ENCODE measurements at regions of chr1 and their contacts with region 1.

Region 1: DNA sequence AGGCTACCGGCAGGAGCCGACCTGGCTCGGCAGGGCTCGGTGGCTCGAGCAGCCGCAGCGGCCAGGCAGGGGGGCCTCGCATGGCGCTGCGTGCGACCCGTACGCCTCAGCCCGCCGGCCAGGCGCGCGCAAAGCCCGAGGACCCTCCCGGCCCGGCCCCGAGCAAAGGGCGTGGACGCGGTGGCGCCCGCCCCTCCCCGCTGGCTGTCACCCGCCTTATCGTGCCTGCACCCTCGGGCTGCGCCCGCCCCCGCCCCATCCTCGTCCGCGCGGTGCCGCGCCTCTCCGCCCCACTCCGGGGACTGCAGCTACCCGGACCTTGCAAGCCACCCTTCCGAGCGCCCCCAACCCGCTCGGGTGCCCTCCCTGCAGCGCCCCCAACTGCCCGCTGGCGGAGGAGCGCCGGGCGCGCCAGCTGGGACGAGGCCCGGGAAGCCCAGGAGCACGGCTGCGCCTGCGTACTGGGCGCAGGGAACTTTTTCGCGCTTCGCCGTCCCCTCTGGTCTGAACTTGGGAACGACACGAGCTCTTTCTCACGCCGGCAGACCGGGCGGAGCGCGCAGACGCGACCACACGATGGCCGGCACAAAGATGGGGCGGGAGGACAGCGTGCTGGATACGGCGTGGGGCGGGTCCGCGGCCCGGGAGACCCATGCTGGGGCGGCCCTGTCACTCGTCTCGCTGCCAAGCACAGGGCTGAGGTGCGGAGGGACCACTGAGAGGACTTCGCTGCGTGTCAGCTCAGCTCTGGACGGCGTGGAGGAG is at the start of gene ABCB10:
- DNase-seq: peak; percentile 68 to 84 (median 81)
- H3K4me3 ChIP-seq: peak within 1 kb of the TSS; percentile 74
- H3K4me3 Mint-ChIP-seq: peak within 1 kb of the TSS; percentile 94 to 100 (median 97)
- H3K27ac ChIP-seq: peak within 1 kb of the TSS; percentile 59
- H3K27ac Mint-ChIP-seq: peak within 1 kb of the TSS; percentile 85 to 94 (median 90)
- H3K4me1 ChIP-seq: peaks cover 20% of the 10 kb centered on the region
- H3K4me1 Mint-ChIP-seq: peaks cover 39 to 49% (median 48%) of the 10 kb centered on the region in 3 donors
- H3K27me3 ChIP-seq: no peaks in the 10 kb centered on the region
- H3K27me3 Mint-ChIP-seq: no peaks in the 10 kb centered on the region
- total RNA-seq, gene ABCB10: 42.7 to 48.0 TPM

Region 2: GRCh38 chr1:229341774-229342655 is 216.7 kb before region 1 on chr1:
- CTCF ChIA-PET with region 1: no interaction called
- POLR2A ChIA-PET with region 1: interaction called, 11 read pairs
- DNase-seq: peak; percentile 79 to 89 (median 83)
- H3K4me3 ChIP-seq: peak overlapping the region; percentile 68
- H3K4me3 Mint-ChIP-seq: peak overlapping the region; percentile 83 to 95 (median 93)
- H3K27ac ChIP-seq: peak overlapping the region; percentile 76
- H3K27ac Mint-ChIP-seq: peak overlapping the region; percentile 79 to 96 (median 92)
- H3K4me1 ChIP-seq: peaks cover 14% of the 10 kb centered on the region
- H3K4me1 Mint-ChIP-seq: peaks cover 42 to 60% (median 47%) of the 10 kb centered on the region in 3 donors
- H3K27me3 ChIP-seq: no peaks in the 10 kb centered on the region
- H3K27me3 Mint-ChIP-seq: peaks cover 7 to 16% of the 10 kb centered on the region in 2 donors

Region 3: GRCh38 chr1:229430761-229431283 is 127.9 kb before region 1 on chr1:
- CTCF ChIA-PET with region 1: no interaction called
- POLR2A ChIA-PET with region 1: no interaction called
- DNase-seq: peak in 2 of 5 donors; percentile 19 to 31
- H3K4me3 ChIP-seq: peak overlapping the region; percentile 0
- H3K4me3 Mint-ChIP-seq: peak overlapping the region; percentile 65 to 86 (median 84)
- H3K27ac ChIP-seq: no peak overlapping the region
- H3K27ac Mint-ChIP-seq: peak overlapping the region in 1 of 8 donors; percentile 12
- H3K4me1 ChIP-seq: peaks cover 13% of the 10 kb centered on the region
- H3K4me1 Mint-ChIP-seq: peaks cover 15 to 34% (median 19%) of the 10 kb centered on the region in 3 donors
- H3K27me3 ChIP-seq: peaks cover 50% of the 10 kb centered on the region
- H3K27me3 Mint-ChIP-seq: peaks cover 69 to 74% of the 10 kb centered on the region in 2 donors

Region 4: DNA sequence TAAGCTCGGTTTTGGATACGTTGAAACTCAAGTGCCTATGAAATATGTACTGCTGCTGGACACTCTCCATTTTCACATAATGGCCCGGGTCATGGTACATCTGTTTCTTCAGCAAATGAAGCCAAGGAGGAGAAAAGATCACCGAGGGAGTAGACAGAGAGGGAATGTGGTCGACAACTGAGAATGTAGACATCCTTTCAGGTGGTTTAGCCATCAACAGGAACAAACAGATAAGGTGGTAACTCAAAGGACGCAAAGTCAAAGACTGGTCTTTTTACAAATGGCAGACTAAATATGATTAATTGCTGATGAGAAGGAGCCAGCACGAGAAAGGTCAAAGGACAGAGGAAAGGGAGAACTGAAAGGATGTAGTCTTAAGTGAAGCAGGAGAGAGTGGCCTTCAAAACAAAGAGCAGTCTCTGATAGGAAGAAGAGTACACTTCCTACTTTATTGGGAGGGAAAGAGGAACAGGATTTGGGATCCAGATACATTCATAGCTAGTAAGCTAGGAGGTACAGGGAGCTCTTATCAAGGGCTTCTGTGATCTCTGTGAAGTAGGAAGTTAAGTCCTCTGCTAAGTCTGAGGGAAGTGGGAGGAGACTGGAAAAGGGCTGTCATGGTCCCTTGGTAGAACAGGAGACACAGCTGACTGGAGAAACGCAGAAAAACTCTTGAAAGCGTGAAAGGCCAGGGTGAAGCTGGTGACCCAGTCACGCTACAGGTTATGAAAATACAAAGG is 78.9 kb before region 1 on chr1:
- CTCF ChIA-PET with region 1: no interaction called
- POLR2A ChIA-PET with region 1: no interaction called
- DNase-seq: no peak
- H3K4me3 ChIP-seq: no peak overlapping the region
- H3K4me3 Mint-ChIP-seq: no peak overlapping the region
- H3K27ac ChIP-seq: no peak overlapping the region
- H3K27ac Mint-ChIP-seq: peak overlapping the region in 4 of 8 donors; percentile 5 to 39 (median 28)
- H3K4me1 ChIP-seq: no peaks in the 10 kb centered on the region
- H3K4me1 Mint-ChIP-seq: peaks cover 4 to 15% (median 10%) of the 10 kb centered on the region in 3 donors
- H3K27me3 ChIP-seq: no peaks in the 10 kb centered on the region
- H3K27me3 Mint-ChIP-seq: no peaks in the 10 kb centered on the region

Region 5: DNA sequence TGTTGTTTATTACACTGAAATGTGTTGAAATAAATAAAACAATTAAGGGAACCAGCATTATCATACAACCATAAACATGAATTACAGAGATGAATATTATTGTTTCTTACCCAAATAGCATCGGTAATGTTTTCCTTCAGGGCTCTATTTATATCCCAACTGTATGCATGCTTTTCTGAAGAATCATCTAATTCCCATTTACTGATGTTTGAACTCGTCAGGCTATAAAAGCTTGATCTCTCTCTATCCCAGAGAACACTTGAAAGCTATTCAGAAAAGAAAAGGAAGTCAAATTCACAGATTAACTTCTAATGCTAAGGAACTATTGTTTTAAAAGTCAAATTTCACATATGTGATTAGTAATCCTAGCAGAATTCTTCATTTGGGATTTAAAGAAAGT is 63.0 kb before region 1 on chr1:
- CTCF ChIA-PET with region 1: no interaction called
- POLR2A ChIA-PET with region 1: no interaction called
- DNase-seq: no peak
- H3K4me3 ChIP-seq: no peak overlapping the region
- H3K4me3 Mint-ChIP-seq: no peak overlapping the region
- H3K27ac ChIP-seq: no peak overlapping the region
- H3K27ac Mint-ChIP-seq: no peak overlapping the region
- H3K4me1 ChIP-seq: no peaks in the 10 kb centered on the region
- H3K4me1 Mint-ChIP-seq: peaks cover 0 to 5% (median 0%) of the 10 kb centered on the region in 3 donors
- H3K27me3 ChIP-seq: no peaks in the 10 kb centered on the region
- H3K27me3 Mint-ChIP-seq: no peaks in the 10 kb centered on the region

Region 6: DNA sequence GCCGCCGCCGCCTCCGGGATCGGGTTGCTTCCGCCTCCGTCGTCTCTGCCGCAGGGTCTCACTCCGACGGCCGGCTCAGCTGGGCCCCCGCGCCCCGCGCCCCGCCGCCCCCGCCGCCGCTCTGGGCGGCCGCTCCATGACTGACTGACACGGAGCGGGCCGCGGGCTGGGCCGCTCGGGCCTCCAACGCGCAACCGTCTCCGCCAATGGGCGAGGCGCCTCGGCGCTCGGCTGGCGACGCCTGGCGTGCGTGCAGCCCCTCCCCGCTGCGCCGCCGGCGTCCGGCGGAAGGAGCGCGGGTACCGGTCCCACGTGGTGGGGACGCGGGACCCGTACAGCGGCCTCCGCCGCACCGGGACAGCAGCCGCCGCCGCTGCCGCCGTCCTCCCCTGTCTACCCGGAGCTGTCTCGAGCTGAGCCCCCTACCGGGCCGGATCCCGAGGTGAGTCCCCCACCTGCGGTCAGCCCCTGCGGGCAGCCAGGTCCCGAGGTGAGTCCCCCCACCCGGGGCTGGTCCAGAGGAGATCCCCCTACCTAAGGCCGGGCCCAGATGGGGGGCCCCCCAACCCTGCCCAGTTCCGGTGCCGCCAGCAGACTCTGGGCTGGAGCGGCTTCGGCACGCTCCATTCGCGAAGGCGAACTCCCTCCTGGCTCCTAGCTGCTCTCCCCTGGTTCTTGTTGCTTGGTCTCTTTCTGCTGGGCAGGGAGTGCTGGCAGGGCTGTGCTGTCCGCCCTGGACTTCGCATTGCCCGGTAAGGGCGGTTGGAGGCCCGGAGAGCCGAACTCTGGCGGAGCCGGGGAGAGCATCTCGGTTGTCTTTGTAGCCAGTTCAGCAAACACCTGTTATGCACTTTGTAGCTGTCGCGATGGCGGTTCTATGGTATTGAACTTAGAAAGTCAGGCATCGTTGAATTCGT is 67.4 kb after region 1 on chr1 and contains the starts of genes TAF5L and URB2:
- CTCF ChIA-PET with region 1: interaction called, 19 read pairs
- POLR2A ChIA-PET with region 1: interaction called, 18 read pairs
- DNase-seq: peak; percentile 77 to 88 (median 84)
- H3K4me3 ChIP-seq: peak within 1 kb of the TSS; percentile 89
- H3K4me3 Mint-ChIP-seq: peak within 1 kb of the TSS; percentile 95 to 99 (median 98)
- H3K27ac ChIP-seq: peak within 1 kb of the TSS; percentile 71
- H3K27ac Mint-ChIP-seq: peak within 1 kb of the TSS; percentile 88 to 99 (median 97)
- H3K4me1 ChIP-seq: peaks cover 30% of the 10 kb centered on the region
- H3K4me1 Mint-ChIP-seq: peaks cover 43 to 79% (median 64%) of the 10 kb centered on the region in 3 donors
- H3K27me3 ChIP-seq: no peaks in the 10 kb centered on the region
- H3K27me3 Mint-ChIP-seq: no peaks in the 10 kb centered on the region
- total RNA-seq, gene TAF5L: 30.5 to 31.7 TPM
- total RNA-seq, gene URB2: 37.6 to 38.2 TPM

Measured in CD8-positive, alpha-beta memory T cell (primary cell).